Right ventricle myocardium inferior (tissue), 1 donor: ENCODE measurements at regions of chr18 and their contacts with region 1.

Region 1: GRCh38 chr18:37476182-37476581 is 89.4 kb downstream of the CELF4 start:
- DNase-seq: peak; percentile 28
- ATAC-seq: no peak

Region 2: GRCh38 chr18:37385846-37386778 is 90.1 kb before region 1 on chr18:
- intact Hi-C with region 1: loop called (anchors 2 kb)
- DNase-seq: no peak
- ATAC-seq: no peak

Region 3: DNA sequence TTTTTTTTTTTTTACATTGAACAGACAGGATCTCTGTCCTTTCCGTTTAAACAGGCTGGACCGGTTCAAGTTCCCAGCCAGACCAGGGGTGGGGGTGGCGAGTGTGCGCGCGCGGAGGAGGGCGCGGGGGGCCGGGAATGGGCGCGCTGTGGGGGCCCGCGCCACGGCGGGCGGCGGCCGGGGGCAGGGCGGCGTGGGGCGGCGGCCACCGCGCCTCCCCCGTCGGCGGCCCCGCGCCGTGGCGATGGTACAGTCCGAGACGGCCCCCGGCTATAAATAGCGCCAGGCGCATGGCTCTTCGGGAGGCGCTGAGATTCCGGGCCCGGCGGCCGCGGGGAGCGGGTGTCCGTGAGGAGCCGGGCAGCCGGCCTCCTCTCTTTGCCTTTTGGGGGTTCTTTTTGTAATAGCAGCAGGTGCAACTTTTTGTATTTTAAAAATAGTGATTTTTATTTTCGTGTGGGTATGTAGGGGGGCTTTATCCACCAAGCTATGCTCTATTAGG is 89.8 kb after region 1 on chr18:
- intact Hi-C with region 1: no loop called
- DNase-seq: no peak
- ATAC-seq: peak; percentile 74